B cell (primary cell): ENCODE measurements at regions of chr1 and their contacts with region 1.

Region 1: GRCh38 chr1:16187748-16188401 is 24.6 kb downstream of the ARHGEF19 start:
- DNase-seq: peak; percentile 81
- ATAC-seq: peak; percentile 88
- H3K4me3 ChIP-seq: no peak overlapping the region
- H3K4me3 Mint-ChIP-seq: no peak overlapping the region
- H3K27ac ChIP-seq: no peak overlapping the region
- H3K27ac Mint-ChIP-seq: no peak overlapping the region
- H3K4me1 ChIP-seq: peaks cover 5 to 7% of the 10 kb centered on the region in 2 donors
- H3K4me1 Mint-ChIP-seq: peaks cover 2% of the 10 kb centered on the region
- H3K27me3 ChIP-seq: peaks cover 0 to 26% (median 9%) of the 10 kb centered on the region in 4 experiments
- H3K27me3 Mint-ChIP-seq: peaks cover 24% of the 10 kb centered on the region
- CTCF ChIP-seq: peak; percentile 95

Region 2: DNA sequence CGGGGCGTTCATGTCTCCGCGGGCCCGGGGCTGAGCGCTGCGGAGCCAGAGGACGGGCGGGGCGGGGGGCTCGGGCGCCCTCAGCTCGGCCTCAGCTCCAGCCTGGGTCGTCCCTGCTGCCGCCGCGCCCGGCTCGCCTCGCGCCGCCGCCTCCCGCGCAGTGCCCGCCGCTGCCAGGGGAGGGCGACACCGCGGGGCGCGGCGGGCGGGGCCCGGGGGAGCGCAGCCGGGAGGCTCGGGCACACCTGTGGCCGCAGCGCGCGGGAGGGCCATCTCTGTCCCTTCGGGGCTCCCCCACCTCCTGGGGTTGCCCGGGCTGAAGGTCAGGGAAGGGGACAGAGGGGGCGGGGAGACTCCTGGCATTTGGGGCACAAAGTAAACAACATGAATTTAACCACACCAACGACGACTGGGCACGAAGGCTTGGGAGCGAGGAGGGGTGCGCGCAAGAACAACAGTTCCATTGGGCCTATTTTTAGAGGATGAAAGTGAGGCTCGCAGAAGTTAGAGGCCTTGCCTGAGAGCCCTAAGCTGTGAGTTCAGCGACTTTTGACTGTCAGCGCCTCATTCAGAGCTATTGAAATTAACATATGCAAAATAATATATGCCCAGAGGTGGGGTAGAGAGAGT is 114.3 kb before region 1 on chr1 and contains the start of gene FAM131C:
- CTCF ChIA-PET with region 1: interaction called, 237 read pairs
- POLR2A ChIA-PET with region 1: interaction called, 5 read pairs
- intact Hi-C with region 1: no loop called
- DNase-seq: peak; percentile 69
- ATAC-seq: peak; percentile 92
- H3K4me3 ChIP-seq: peak within 1 kb of the TSS in 4 of 5 experiments; percentile 3 to 50 (median 44)
- H3K4me3 Mint-ChIP-seq: peak within 1 kb of the TSS; percentile 89
- H3K27ac ChIP-seq: no peak within 1 kb of the TSS
- H3K27ac Mint-ChIP-seq: peak within 1 kb of the TSS; percentile 23
- H3K4me1 ChIP-seq: peaks cover 7 to 11% of the 10 kb centered on the region in 2 donors
- H3K4me1 Mint-ChIP-seq: peaks cover 12% of the 10 kb centered on the region
- H3K27me3 ChIP-seq: peaks cover 0 to 37% (median 13%) of the 10 kb centered on the region in 4 experiments
- H3K27me3 Mint-ChIP-seq: peaks cover 21% of the 10 kb centered on the region
- CTCF ChIP-seq: no peak
- total RNA-seq, gene FAM131C: 0.37 and 0.58 TPM in 2 replicates

Region 3: GRCh38 chr1:16243936-16244649 is 56.2 kb after region 1 on chr1:
- CTCF ChIA-PET with region 1: interaction called, 10 read pairs
- POLR2A ChIA-PET with region 1: no interaction called
- intact Hi-C with region 1: loop called (anchors 1 kb)
- DNase-seq: peak; percentile 79
- ATAC-seq: peak; percentile 93
- H3K4me3 ChIP-seq: no peak overlapping the region
- H3K4me3 Mint-ChIP-seq: no peak overlapping the region
- H3K27ac ChIP-seq: no peak overlapping the region
- H3K27ac Mint-ChIP-seq: no peak overlapping the region
- H3K4me1 ChIP-seq: peaks cover 6 to 7% of the 10 kb centered on the region in 2 donors
- H3K4me1 Mint-ChIP-seq: peaks cover 12% of the 10 kb centered on the region
- H3K27me3 ChIP-seq: no peaks in the 10 kb centered on the region
- H3K27me3 Mint-ChIP-seq: no peaks in the 10 kb centered on the region
- CTCF ChIP-seq: peak; percentile 81